ENCODE measurements at regions of chr7 and their contacts with region 1.

Region 1: DNA sequence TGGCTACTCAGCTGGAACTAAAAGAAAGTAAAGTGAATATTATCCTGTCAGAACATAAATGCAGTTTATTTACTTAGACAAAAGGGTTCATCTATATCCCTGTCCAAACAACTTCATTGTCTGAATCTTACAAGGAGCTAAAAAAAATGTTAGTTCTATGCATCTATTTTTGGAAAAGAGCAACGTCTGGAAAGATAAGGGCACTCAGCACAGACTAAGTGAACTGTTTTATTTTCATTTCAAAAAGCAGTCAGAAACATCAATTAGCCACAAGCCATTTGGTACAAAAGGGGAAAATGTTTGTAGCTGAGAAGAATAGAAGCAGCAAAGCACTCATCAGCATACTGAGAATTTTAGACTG is 245.5 kb downstream of the FOXP2 start:
- DNase-seq: no peak
- H3K4me3 ChIP-seq: no peak overlapping the region
- H3K27ac ChIP-seq: no peak overlapping the region
- H3K4me1 ChIP-seq: peaks cover 0 to 15% (median 5%) of the 10 kb centered on the region in 4 experiments; a peak in 3 of 7 replicates
- H3K27me3 ChIP-seq: no peaks in the 10 kb centered on the region
- CTCF ChIP-seq: no peak
- EP300 ChIP-seq: no peak
- POLR2A ChIP-seq: no peak
- RAD21 ChIP-seq: no peak

Region 2: GRCh38 chr7:114670676-114671075 is 10.6 kb after region 1 on chr7:
- CTCF ChIA-PET with region 1: interaction called, 10 read pairs
- POLR2A ChIA-PET with region 1: no interaction called
- DNase-seq: no peak
- H3K4me3 ChIP-seq: no peak overlapping the region
- H3K27ac ChIP-seq: no peak overlapping the region
- H3K4me1 ChIP-seq: no peaks in the 10 kb centered on the region
- H3K27me3 ChIP-seq: no peaks in the 10 kb centered on the region
- CTCF ChIP-seq: no peak
- EP300 ChIP-seq: no peak
- POLR2A ChIP-seq: no peak
- RAD21 ChIP-seq: no peak

Measured in H1 (cell line).